CD8-positive, alpha-beta T cell (primary cell): ENCODE measurements at regions of chr19 and their contacts with region 1.

Region 1: DNA sequence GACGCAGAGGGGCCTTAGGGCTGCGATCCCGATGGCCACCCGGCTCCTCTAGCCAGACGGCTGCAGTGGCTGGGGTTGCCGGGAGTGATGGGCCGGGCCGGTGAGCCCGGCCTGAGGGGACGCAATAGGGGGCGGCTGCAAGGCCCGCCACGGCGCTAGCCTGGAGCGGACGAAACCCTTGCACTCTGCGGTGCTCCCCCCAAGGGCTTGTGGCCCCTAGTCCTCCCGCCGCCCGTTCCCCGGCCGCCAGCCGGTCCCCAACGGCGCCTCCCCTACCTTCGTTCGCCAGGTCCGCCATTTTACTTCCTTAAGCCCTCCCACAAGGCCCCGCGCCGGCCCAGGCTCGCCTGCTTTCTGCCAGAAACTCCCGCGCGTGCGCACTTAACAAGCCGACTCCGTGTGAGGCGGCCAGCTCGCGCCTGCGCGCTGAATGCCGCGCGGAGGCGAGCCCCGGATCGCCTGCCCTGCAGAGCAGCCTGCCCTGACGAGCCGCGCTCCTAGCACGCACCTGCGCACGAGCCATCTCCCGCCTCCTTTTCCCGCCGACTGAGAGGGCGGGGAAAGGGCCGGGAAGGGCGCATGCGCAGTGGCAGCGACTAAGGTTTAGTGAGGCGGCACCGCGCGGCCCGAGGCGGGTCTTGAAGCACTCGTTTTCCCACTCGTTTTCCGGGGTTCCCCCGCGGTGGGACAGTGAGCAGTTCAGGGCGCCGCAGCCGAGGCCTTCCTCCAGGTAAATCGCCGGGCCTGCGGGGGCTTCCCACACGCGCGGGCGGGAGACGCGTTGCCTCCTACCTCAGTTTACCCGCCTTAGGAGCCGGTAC is at the start of gene RANBP3:
- DNase-seq: peak; percentile 94 to 100 (median 99)
- ATAC-seq: peak; percentile 88
- H3K4me3 ChIP-seq: peak within 1 kb of the TSS; percentile 65 to 91
- H3K4me3 Mint-ChIP-seq: peak within 1 kb of the TSS; percentile 96
- H3K27ac ChIP-seq: peak within 1 kb of the TSS; percentile 83 to 85
- H3K27ac Mint-ChIP-seq: peak within 1 kb of the TSS; percentile 95
- H3K4me1 ChIP-seq: peaks cover 50% of the 10 kb centered on the region
- H3K4me1 Mint-ChIP-seq: peaks cover 56% of the 10 kb centered on the region
- H3K27me3 ChIP-seq: no peaks in the 10 kb centered on the region
- H3K27me3 Mint-ChIP-seq: no peaks in the 10 kb centered on the region
- CTCF ChIP-seq: no peak
- total RNA-seq, gene RANBP3: 109 to 118 TPM

Region 2: GRCh38 chr19:5622463-5623396 is 355.3 kb before region 1 on chr19 and contains the starts of genes SAFB and SAFB2:
- CTCF ChIA-PET with region 1: no interaction called
- POLR2A ChIA-PET with region 1: no interaction called
- intact Hi-C with region 1: loop called in 1 of 2 experiments (anchors 1 kb)
- DNase-seq: peak; percentile 99 to 100 (median 99)
- ATAC-seq: peak; percentile 87
- H3K4me3 ChIP-seq: peak within 1 kb of the TSS; percentile 91 to 93
- H3K4me3 Mint-ChIP-seq: peak within 1 kb of the TSS; percentile 100
- H3K27ac ChIP-seq: peak within 1 kb of the TSS; percentile 90 to 94
- H3K27ac Mint-ChIP-seq: peak within 1 kb of the TSS; percentile 99
- H3K4me1 ChIP-seq: peaks cover 77% of the 10 kb centered on the region
- H3K4me1 Mint-ChIP-seq: peaks cover 69% of the 10 kb centered on the region
- H3K27me3 ChIP-seq: no peaks in the 10 kb centered on the region
- H3K27me3 Mint-ChIP-seq: no peaks in the 10 kb centered on the region
- CTCF ChIP-seq: no peak
- total RNA-seq, gene SAFB: 190 to 191 TPM
- total RNA-seq, gene SAFB2: 293 to 302 TPM

Region 3: GRCh38 chr19:5690125-5690954 is 287.7 kb before region 1 on chr19 and contains the start of gene RPL36:
- CTCF ChIA-PET with region 1: no interaction called
- POLR2A ChIA-PET with region 1: no interaction called
- intact Hi-C with region 1: loop called in 1 of 2 experiments (anchors 5 kb)
- DNase-seq: peak; percentile 95 to 100 (median 99)
- ATAC-seq: peak; percentile 63
- H3K4me3 ChIP-seq: peak within 1 kb of the TSS; percentile 84 to 96
- H3K4me3 Mint-ChIP-seq: peak within 1 kb of the TSS; percentile 91
- H3K27ac ChIP-seq: peak within 1 kb of the TSS; percentile 86 to 89
- H3K27ac Mint-ChIP-seq: peak within 1 kb of the TSS; percentile 93
- H3K4me1 ChIP-seq: peaks cover 26% of the 10 kb centered on the region
- H3K4me1 Mint-ChIP-seq: peaks cover 48% of the 10 kb centered on the region
- H3K27me3 ChIP-seq: no peaks in the 10 kb centered on the region
- H3K27me3 Mint-ChIP-seq: no peaks in the 10 kb centered on the region
- CTCF ChIP-seq: peak; percentile 96
- total RNA-seq, gene RPL36: 1,425 to 1,465 TPM

Region 4: DNA sequence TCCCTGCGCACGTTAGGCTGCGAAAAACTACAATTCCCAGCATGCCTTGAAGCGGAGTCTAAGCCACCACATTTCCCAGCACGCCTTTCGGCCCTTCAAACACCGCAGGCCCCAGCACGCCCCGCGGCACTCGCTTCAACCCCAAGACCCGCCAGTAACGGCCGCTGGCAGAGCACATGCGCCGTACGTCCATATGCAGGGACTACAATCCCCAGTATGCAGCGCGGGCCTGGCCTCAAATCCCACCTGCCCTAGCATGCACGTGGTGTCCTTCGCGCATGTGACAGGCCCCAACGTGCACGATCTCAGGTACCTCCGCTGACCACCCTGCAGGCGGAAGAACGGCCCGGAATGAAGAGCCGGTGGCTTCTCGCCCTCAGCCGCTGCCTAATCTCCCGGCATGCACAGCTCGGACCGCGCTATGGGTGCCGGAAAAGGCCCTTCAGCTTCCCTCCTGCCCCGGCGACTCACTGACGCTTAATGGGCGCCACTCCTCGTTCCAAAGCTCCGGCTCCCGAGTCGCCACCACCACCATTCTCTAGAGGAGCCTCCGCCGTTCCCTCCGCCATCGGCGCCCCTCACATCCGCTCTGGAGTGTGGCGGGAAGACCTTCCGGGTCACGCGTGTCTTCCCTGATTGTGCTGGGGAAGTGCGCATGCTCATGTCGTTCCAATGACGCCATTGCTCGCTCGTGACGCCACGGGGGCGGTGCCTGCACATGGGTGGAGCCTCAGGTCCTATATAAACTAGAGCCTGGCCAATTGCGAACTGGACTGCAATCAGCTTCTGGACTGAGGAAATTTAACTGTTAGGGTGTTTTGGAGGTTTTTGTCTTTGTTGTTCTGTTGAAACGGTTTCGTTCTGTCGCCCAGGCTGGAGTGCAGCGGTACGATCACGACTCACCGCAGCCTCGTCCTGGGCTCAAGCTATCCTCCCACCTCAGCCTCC is 187.1 kb before region 1 on chr19 and contains the start of gene DUS3L:
- CTCF ChIA-PET with region 1: no interaction called
- POLR2A ChIA-PET with region 1: no interaction called
- intact Hi-C with region 1: loop called in 1 of 2 experiments (anchors 1 kb)
- DNase-seq: peak; percentile 91 to 98 (median 94)
- ATAC-seq: peak; percentile 95
- H3K4me3 ChIP-seq: peak within 1 kb of the TSS; percentile 86 to 91
- H3K4me3 Mint-ChIP-seq: peak within 1 kb of the TSS; percentile 97
- H3K27ac ChIP-seq: peak within 1 kb of the TSS; percentile 94 to 97
- H3K27ac Mint-ChIP-seq: peak within 1 kb of the TSS; percentile 99
- H3K4me1 ChIP-seq: peaks cover 7% of the 10 kb centered on the region
- H3K4me1 Mint-ChIP-seq: peaks cover 17% of the 10 kb centered on the region
- H3K27me3 ChIP-seq: no peaks in the 10 kb centered on the region
- H3K27me3 Mint-ChIP-seq: peaks cover 2% of the 10 kb centered on the region
- CTCF ChIP-seq: no peak
- total RNA-seq, gene DUS3L: 174 to 192 TPM

Region 5: DNA sequence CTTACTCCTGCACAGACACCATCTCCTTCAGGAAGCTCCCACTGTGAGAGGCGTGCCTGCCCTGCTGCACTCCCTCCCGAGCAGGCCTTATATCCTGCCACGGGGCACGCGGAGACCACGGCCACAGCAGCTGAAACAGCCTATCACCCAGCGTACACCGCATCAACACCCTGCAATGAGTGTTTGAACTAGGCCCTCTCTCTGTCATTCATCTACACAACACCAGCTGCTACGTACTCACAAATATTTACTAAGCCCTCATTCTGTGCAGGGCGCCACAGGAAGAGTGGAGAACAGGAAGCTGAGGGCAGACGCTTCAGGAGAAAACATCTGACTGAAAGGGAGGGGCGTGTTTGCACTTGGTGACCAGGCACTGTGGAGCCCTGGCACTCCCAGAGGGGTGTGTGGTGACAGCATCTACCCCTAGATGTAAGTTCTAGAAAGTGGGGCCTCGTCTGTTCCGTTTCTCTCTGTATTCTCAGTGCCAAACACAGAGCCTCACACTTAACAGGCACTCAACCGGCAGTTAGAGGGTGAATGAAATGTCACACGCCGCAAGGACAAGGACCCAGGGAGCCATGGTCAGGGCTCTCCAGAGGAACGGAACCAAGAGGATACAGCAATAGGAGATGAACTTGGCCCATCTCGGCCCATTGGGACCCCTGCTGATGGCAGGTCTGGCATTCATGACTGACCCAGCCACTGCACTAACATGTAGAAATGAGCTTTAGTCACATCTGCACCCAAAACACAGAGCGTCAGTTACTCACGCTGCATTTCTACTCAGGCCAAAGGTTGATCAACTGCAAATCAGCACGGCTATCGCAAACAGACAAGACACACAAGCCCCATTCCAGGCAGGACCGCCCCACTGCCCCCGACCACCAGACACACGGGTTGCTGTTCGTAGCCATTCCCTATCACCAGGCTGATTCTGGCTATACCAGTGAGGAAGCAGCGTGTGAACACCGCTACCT is 15.7 kb before region 1 on chr19:
- CTCF ChIA-PET with region 1: interaction called, 61 read pairs
- POLR2A ChIA-PET with region 1: interaction called, 9 read pairs
- intact Hi-C with region 1: loop called (anchors 1 to 2 kb)
- DNase-seq: peak; percentile 62 to 93 (median 81)
- ATAC-seq: peak; percentile 92
- H3K4me3 ChIP-seq: peak overlapping the region; percentile 22 to 29
- H3K4me3 Mint-ChIP-seq: peak overlapping the region; percentile 78
- H3K27ac ChIP-seq: peak overlapping the region; percentile 81 to 89
- H3K27ac Mint-ChIP-seq: peak overlapping the region; percentile 100
- H3K4me1 ChIP-seq: peaks cover 96% of the 10 kb centered on the region
- H3K4me1 Mint-ChIP-seq: peaks cover 91% of the 10 kb centered on the region
- H3K27me3 ChIP-seq: no peaks in the 10 kb centered on the region
- H3K27me3 Mint-ChIP-seq: no peaks in the 10 kb centered on the region
- CTCF ChIP-seq: peak; percentile 23

Region 6: DNA sequence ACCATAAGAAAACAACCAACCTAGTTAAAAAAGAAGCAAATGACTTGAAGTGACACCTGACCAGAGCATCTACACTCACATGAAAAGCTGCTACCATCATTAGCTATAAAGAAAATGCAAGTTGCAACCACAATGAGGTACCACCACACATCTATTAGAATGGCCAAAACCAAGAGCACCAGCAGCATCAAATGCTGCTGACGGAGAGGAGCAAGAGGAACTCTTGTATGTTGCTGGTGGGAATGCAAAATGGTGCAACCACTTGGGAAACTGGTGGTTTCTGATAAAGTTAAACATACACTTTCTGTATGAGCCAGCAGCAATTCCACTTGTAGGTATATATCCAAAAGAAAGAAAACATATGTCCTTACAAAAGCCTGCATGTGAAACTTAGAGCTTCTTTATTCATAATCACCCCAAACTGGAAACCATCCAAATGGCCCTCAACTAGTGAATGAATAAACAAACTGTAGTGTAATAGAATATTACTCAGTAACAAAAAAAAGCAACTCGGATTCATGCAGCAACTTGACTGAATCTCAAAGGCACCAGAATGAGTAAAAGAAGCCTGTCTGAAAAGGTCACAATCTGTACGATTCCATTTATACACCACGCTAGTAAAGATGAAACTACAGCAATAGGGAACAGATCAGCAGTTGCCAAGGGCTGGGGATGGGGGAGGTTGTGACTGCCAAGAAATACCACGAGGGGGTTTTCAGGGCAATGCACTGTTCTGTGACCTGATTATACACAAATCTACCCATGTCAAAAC is 60.8 kb after region 1 on chr19:
- CTCF ChIA-PET with region 1: no interaction called
- POLR2A ChIA-PET with region 1: no interaction called
- intact Hi-C with region 1: no loop called
- DNase-seq: peak in 1 of 9 experiments; percentile 5
- ATAC-seq: no peak
- H3K4me3 ChIP-seq: no peak overlapping the region
- H3K4me3 Mint-ChIP-seq: no peak overlapping the region
- H3K27ac ChIP-seq: no peak overlapping the region
- H3K27ac Mint-ChIP-seq: no peak overlapping the region
- H3K4me1 ChIP-seq: no peaks in the 10 kb centered on the region
- H3K4me1 Mint-ChIP-seq: no peaks in the 10 kb centered on the region
- H3K27me3 ChIP-seq: no peaks in the 10 kb centered on the region
- H3K27me3 Mint-ChIP-seq: no peaks in the 10 kb centered on the region
- CTCF ChIP-seq: no peak

Region 7: DNA sequence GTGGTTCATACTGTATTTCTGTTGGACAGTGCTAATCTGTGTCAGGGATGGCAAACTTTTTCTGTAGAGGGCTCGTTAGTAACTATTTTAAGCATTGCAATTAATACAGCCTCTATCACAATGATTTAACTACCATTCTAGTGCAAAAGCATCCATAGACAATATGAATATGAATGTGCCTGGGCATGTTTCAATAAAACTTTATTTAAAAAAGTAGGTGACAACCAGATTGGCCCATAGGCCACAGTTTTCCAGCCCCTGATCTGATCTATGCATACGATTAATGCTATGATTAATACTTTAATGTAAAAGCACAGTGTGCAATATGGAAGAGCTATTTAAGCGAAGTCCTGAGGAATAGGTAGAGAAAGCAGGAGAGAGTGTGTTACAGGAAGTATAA is 939.0 kb after region 1 on chr19:
- CTCF ChIA-PET with region 1: no interaction called
- POLR2A ChIA-PET with region 1: no interaction called
- intact Hi-C with region 1: no loop called
- DNase-seq: no peak
- ATAC-seq: no peak
- H3K4me3 ChIP-seq: no peak overlapping the region
- H3K4me3 Mint-ChIP-seq: no peak overlapping the region
- H3K27ac ChIP-seq: no peak overlapping the region
- H3K27ac Mint-ChIP-seq: no peak overlapping the region
- H3K4me1 ChIP-seq: no peaks in the 10 kb centered on the region
- H3K4me1 Mint-ChIP-seq: no peaks in the 10 kb centered on the region
- H3K27me3 ChIP-seq: no peaks in the 10 kb centered on the region
- H3K27me3 Mint-ChIP-seq: no peaks in the 10 kb centered on the region
- CTCF ChIP-seq: no peak